Naive thymus-derived CD4-positive, alpha-beta T cell (primary cell): ENCODE measurements at regions of chr19 and their contacts with region 1.

Region 1: GRCh38 chr19:18408053-18408476 is 10.6 kb upstream of the LRRC25 start:
- DNase-seq: no peak
- ATAC-seq: peak; percentile 40
- H3K4me3 ChIP-seq: no peak overlapping the region
- H3K4me3 Mint-ChIP-seq: no peak overlapping the region
- H3K27ac ChIP-seq: no peak overlapping the region
- H3K27ac Mint-ChIP-seq: no peak overlapping the region
- H3K4me1 ChIP-seq: no peaks in the 10 kb centered on the region
- H3K4me1 Mint-ChIP-seq: peaks cover 0 to 7% (median 0%) of the 10 kb centered on the region in 7 donors
- H3K27me3 ChIP-seq: no peaks in the 10 kb centered on the region
- H3K27me3 Mint-ChIP-seq: peaks cover 0 to 9% (median 4%) of the 10 kb centered on the region in 5 donors

Region 2: GRCh38 chr19:18291590-18292461 is 116.2 kb before region 1 on chr19:
- CTCF ChIA-PET with region 1: no interaction called
- POLR2A ChIA-PET with region 1: no interaction called
- intact Hi-C with region 1: no loop called
- DNase-seq: peak in 8 of 9 donors; percentile 67 to 93 (median 70)
- ATAC-seq: peak; percentile 62
- H3K4me3 ChIP-seq: peak overlapping the region; percentile 84
- H3K4me3 Mint-ChIP-seq: peak overlapping the region; percentile 80 to 96 (median 92)
- H3K27ac ChIP-seq: peak overlapping the region; percentile 92
- H3K27ac Mint-ChIP-seq: peak overlapping the region; percentile 87 to 100 (median 97)
- H3K4me1 ChIP-seq: peaks cover 41 to 47% of the 10 kb centered on the region in 2 donors
- H3K4me1 Mint-ChIP-seq: peaks cover 38 to 73% (median 58%) of the 10 kb centered on the region in 7 donors
- H3K27me3 ChIP-seq: no peaks in the 10 kb centered on the region
- H3K27me3 Mint-ChIP-seq: no peaks in the 10 kb centered on the region

Region 3: GRCh38 chr19:18340190-18340989 is 67.7 kb before region 1 on chr19 and contains the start of gene PGPEP1:
- CTCF ChIA-PET with region 1: interaction called, 3 read pairs
- POLR2A ChIA-PET with region 1: no interaction called
- intact Hi-C with region 1: loop called (anchors 2 to 5 kb)
- DNase-seq: peak in 8 of 9 donors; percentile 32 to 80 (median 54)
- ATAC-seq: peak; percentile 81
- H3K4me3 ChIP-seq: peak within 1 kb of the TSS; percentile 66
- H3K4me3 Mint-ChIP-seq: peak within 1 kb of the TSS; percentile 77 to 95 (median 90)
- H3K27ac ChIP-seq: peak within 1 kb of the TSS; percentile 74
- H3K27ac Mint-ChIP-seq: peak within 1 kb of the TSS; percentile 70 to 96 (median 90)
- H3K4me1 ChIP-seq: peaks cover 11 to 13% of the 10 kb centered on the region in 2 donors
- H3K4me1 Mint-ChIP-seq: peaks cover 12 to 25% (median 21%) of the 10 kb centered on the region in 7 donors
- H3K27me3 ChIP-seq: no peaks in the 10 kb centered on the region
- H3K27me3 Mint-ChIP-seq: no peaks in the 10 kb centered on the region
- total RNA-seq, gene PGPEP1: 26.6 to 57.1 (median 43.8) TPM

Region 4: GRCh38 chr19:18349524-18350128 is 58.4 kb before region 1 on chr19:
- CTCF ChIA-PET with region 1: no interaction called
- POLR2A ChIA-PET with region 1: no interaction called
- intact Hi-C with region 1: loop called (anchors 1 to 5 kb)
- DNase-seq: peak in 2 of 9 donors; percentile 3 to 34
- ATAC-seq: peak; percentile 65
- H3K4me3 ChIP-seq: no peak overlapping the region
- H3K4me3 Mint-ChIP-seq: no peak overlapping the region
- H3K27ac ChIP-seq: no peak overlapping the region
- H3K27ac Mint-ChIP-seq: no peak overlapping the region
- H3K4me1 ChIP-seq: no peaks in the 10 kb centered on the region
- H3K4me1 Mint-ChIP-seq: peaks cover 0 to 17% (median 10%) of the 10 kb centered on the region in 7 donors
- H3K27me3 ChIP-seq: no peaks in the 10 kb centered on the region
- H3K27me3 Mint-ChIP-seq: no peaks in the 10 kb centered on the region

Region 5: GRCh38 chr19:18388100-18388959 is 19.7 kb before region 1 on chr19:
- CTCF ChIA-PET with region 1: interaction called, 37 read pairs
- POLR2A ChIA-PET with region 1: no interaction called
- intact Hi-C with region 1: loop called (anchors 1 kb)
- DNase-seq: peak; percentile 38 to 86 (median 65)
- ATAC-seq: peak; percentile 90
- H3K4me3 ChIP-seq: peak overlapping the region; percentile 38
- H3K4me3 Mint-ChIP-seq: peak overlapping the region; percentile 62 to 83 (median 78)
- H3K27ac ChIP-seq: no peak overlapping the region
- H3K27ac Mint-ChIP-seq: peak overlapping the region in 1 of 9 donors; percentile 42
- H3K4me1 ChIP-seq: peaks cover 0 to 4% of the 10 kb centered on the region in 2 donors
- H3K4me1 Mint-ChIP-seq: peaks cover 0 to 12% (median 7%) of the 10 kb centered on the region in 7 donors
- H3K27me3 ChIP-seq: peaks cover 0 to 11% of the 10 kb centered on the region in 2 donors
- H3K27me3 Mint-ChIP-seq: peaks cover 19 to 73% (median 29%) of the 10 kb centered on the region in 5 donors

Region 6: DNA sequence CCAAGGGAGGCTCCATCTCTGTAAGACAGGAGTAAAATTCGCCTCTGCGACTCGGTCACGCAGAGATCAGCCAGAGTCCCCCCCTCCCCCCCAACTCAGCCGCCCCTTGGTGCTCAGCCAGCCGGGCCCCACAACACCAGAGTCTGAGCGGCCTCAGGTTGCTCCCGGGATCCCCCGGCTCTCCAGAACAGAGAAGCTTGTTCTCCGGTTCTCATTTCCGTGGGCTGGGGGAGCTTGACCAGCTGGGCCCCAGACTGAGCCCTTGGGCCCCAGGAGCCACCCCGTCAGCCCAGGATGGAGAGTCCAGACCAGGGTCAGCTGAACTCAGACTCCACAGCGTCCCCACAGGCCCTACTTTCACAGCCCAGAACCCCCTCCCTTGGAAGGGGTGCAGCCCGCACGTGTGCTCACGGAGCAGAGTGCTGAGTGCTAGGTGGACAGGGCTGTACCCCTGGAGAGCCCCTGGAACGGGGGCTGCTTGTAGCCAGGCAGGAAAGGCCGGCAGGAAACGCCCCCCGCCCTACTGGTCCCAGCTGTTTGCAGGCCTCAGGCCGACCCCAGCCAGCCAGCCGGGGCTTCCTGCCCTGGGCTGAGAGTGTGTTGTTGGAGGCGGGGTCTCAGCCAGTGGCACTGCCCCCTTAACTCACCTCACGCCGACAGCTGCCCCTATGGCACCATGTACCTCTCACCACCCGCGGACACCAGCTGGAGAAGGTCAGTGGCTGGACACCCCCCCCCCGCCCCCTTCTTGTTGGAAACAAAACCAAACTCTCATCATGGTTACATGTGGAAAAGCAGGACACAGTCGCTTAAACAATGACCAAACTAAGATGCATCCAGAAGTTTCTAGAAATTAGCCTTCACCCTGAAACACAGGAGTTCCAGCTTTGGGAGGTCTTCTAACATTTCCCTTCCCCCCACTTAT is 338.6 kb after region 1 on chr19:
- CTCF ChIA-PET with region 1: no interaction called
- POLR2A ChIA-PET with region 1: no interaction called
- intact Hi-C with region 1: no loop called
- DNase-seq: no peak
- ATAC-seq: no peak
- H3K4me3 ChIP-seq: no peak overlapping the region
- H3K4me3 Mint-ChIP-seq: no peak overlapping the region
- H3K27ac ChIP-seq: no peak overlapping the region
- H3K27ac Mint-ChIP-seq: no peak overlapping the region
- H3K4me1 ChIP-seq: no peaks in the 10 kb centered on the region
- H3K4me1 Mint-ChIP-seq: no peaks in the 10 kb centered on the region
- H3K27me3 ChIP-seq: no peaks in the 10 kb centered on the region
- H3K27me3 Mint-ChIP-seq: no peaks in the 10 kb centered on the region